IMR-90 (cell line): ENCODE measurements at regions of chr7 and their contacts with region 1.

Region 1: GRCh38 chr7:91299952-91300775 is 35.9 kb downstream of the FZD1 start:
- DNase-seq: no peak
- ATAC-seq: no peak
- H3K4me3 ChIP-seq: no peak overlapping the region
- H3K27ac ChIP-seq: no peak overlapping the region
- H3K4me1 ChIP-seq: no peaks in the 10 kb centered on the region
- H3K27me3 ChIP-seq: peaks cover 8% of the 10 kb centered on the region
- CTCF ChIP-seq: no peak
- POLR2A ChIP-seq: no peak
- RAD21 ChIP-seq: no peak

Region 2: DNA sequence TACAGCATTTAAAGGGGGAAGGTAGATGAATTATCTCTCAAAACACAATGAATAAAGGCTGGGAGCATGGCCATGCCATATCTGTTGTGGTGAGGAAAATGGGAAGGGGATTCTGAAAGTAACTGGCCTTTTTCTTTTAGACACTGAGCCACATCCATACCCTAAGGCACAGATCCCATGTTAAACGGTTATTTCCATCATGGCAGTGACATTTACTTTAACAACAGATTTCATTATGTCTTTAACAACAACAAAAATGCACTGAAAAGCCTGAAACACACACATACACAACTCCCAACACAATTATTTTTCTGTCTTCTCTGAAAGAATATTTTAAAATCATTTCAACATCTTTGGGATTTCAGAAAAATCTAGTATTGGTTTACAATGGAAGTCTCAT is 212.0 kb before region 1 on chr7:
- CTCF ChIA-PET with region 1: no interaction called
- POLR2A ChIA-PET with region 1: no interaction called
- dilution Hi-C with region 1: no loop called
- in situ Hi-C with region 1: no loop called
- intact Hi-C with region 1: no loop called
- DNase-seq: no peak
- ATAC-seq: no peak
- H3K4me3 ChIP-seq: no peak overlapping the region
- H3K27ac ChIP-seq: no peak overlapping the region
- H3K4me1 ChIP-seq: 0 out of 2 replicates have a peak, but pooled peaks cover 2% of the 10 kb centered on the region
- H3K27me3 ChIP-seq: no peaks in the 10 kb centered on the region
- CTCF ChIP-seq: no peak
- POLR2A ChIP-seq: no peak
- RAD21 ChIP-seq: no peak

Region 3: GRCh38 chr7:91565499-91566401 is 265.6 kb after region 1 on chr7:
- CTCF ChIA-PET with region 1: no interaction called
- POLR2A ChIA-PET with region 1: no interaction called
- dilution Hi-C with region 1: no loop called
- in situ Hi-C with region 1: no loop called
- intact Hi-C with region 1: loop called (anchors 10 kb)
- DNase-seq: no peak
- ATAC-seq: no peak
- H3K4me3 ChIP-seq: no peak overlapping the region
- H3K27ac ChIP-seq: no peak overlapping the region
- H3K4me1 ChIP-seq: no peaks in the 10 kb centered on the region; the same call in 1 of the 2 replicates
- H3K27me3 ChIP-seq: peaks cover 2% of the 10 kb centered on the region; the same call in 1 of the 2 replicates
- CTCF ChIP-seq: no peak
- POLR2A ChIP-seq: no peak
- RAD21 ChIP-seq: no peak